K562 (cell line): ENCODE measurements at regions of chr12 and their contacts with region 1.

Region 1: DNA sequence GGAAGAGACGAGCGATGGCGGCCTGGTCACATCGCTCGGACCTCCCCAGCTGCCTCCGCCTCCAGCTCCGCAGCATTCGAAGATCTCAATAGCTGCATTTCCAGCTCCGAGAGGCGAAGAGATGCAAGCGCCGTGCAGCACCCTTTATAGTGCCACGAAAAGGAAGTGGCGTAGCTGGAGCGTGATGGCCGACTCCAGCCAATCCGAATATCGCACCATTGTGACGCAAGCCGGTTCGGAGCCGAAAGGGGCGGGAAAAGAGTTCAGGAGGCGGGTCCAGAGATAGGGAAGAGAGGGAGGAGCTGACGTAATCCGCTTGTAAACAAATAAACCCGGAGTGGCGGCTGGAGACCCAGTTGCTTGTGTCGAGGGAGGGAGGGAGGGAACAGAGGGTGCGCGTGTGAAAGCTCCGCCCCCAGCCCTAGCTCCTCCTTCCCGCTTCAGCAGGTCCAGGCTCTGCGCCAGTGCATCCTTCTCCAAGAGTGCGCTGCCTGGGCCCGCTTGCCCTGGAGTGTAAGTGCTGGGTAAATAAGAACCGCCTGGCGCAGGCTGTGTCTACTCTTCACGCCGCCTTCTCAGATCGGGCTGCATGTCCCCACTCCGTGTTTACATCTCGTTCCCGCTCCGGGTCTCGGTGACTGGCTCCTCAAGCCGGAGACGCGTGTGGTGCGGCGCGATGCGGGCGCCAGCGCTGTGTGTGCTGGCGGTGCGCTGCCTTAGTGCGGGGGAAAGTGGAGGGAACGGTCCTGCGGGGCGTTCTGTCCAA is at the start of gene BTG1:
- DNase-seq: peak; percentile 92 to 99 (median 96)
- ATAC-seq: peak; percentile 76
- H3K4me3 ChIP-seq: peak within 1 kb of the TSS; percentile 88
- H3K27ac ChIP-seq: peak within 1 kb of the TSS; percentile 87
- H3K4me1 ChIP-seq: peaks cover 20 to 25% of the 10 kb centered on the region in 2 experiments
- H3K27me3 ChIP-seq: no peaks in the 10 kb centered on the region
- CTCF ChIP-seq: no peak
- EP300 ChIP-seq: peak; percentile 43
- POLR2A ChIP-seq: peak; percentile 100
- RAD21 ChIP-seq: peak; percentile 16 to 17; a peak in 2 of 4 replicates
- polyA plus RNA-seq, gene BTG1: 3.7 to 4.3 TPM

Region 2: GRCh38 chr12:91382081-91382543 is 763.8 kb before region 1 on chr12:
- CTCF ChIA-PET with region 1: no interaction called
- POLR2A ChIA-PET with region 1: interaction called, 5 read pairs
- in situ Hi-C with region 1: no loop called
- intact Hi-C with region 1: loop called (anchors 2 kb)
- DNase-seq: peak; percentile 42 to 85 (median 50)
- ATAC-seq: peak; percentile 84
- H3K4me3 ChIP-seq: no peak overlapping the region
- H3K27ac ChIP-seq: no peak overlapping the region
- H3K4me1 ChIP-seq: no peaks in the 10 kb centered on the region
- H3K27me3 ChIP-seq: no peaks in the 10 kb centered on the region
- CTCF ChIP-seq: peak; percentile 66 to 88 (median 82)
- EP300 ChIP-seq: no peak
- POLR2A ChIP-seq: no peak
- RAD21 ChIP-seq: peak; percentile 79 to 83

Region 3: GRCh38 chr12:91778938-91779400 is 366.9 kb before region 1 on chr12:
- CTCF ChIA-PET with region 1: no interaction called
- POLR2A ChIA-PET with region 1: interaction called, 10 read pairs
- in situ Hi-C with region 1: no loop called
- intact Hi-C with region 1: no loop called
- DNase-seq: peak; percentile 20 to 77 (median 40)
- ATAC-seq: peak; percentile 98
- H3K4me3 ChIP-seq: no peak overlapping the region
- H3K27ac ChIP-seq: no peak overlapping the region
- H3K4me1 ChIP-seq: peaks cover 0 to 12% of the 10 kb centered on the region in 2 experiments; a peak in 3 of 5 replicates
- H3K27me3 ChIP-seq: no peaks in the 10 kb centered on the region
- CTCF ChIP-seq: no peak
- EP300 ChIP-seq: peak; percentile 54; the same call in 1 of the 2 replicates
- POLR2A ChIP-seq: no peak
- RAD21 ChIP-seq: no peak

Region 4: GRCh38 chr12:91910871-91911388 is 235.0 kb before region 1 on chr12:
- CTCF ChIA-PET with region 1: no interaction called
- POLR2A ChIA-PET with region 1: interaction called, 4 read pairs
- in situ Hi-C with region 1: no loop called
- intact Hi-C with region 1: loop called (anchors 10 kb)
- DNase-seq: no peak
- ATAC-seq: peak; percentile 56; the same call in 2 of the 3 replicates
- H3K4me3 ChIP-seq: no peak overlapping the region
- H3K27ac ChIP-seq: no peak overlapping the region
- H3K4me1 ChIP-seq: no peaks in the 10 kb centered on the region
- H3K27me3 ChIP-seq: no peaks in the 10 kb centered on the region
- CTCF ChIP-seq: no peak
- EP300 ChIP-seq: no peak
- POLR2A ChIP-seq: no peak
- RAD21 ChIP-seq: peak in 1 of 2 experiments; percentile 18; a peak in 1 of 4 replicates

Region 5: GRCh38 chr12:92123780-92124688 is 21.9 kb before region 1 on chr12:
- CTCF ChIA-PET with region 1: no interaction called
- POLR2A ChIA-PET with region 1: interaction called, 32 read pairs
- in situ Hi-C with region 1: no loop called
- intact Hi-C with region 1: no loop called
- DNase-seq: no peak
- ATAC-seq: no peak
- H3K4me3 ChIP-seq: no peak overlapping the region
- H3K27ac ChIP-seq: no peak overlapping the region
- H3K4me1 ChIP-seq: peaks cover 0 to 8% of the 10 kb centered on the region in 2 experiments; a peak in 2 of 5 replicates
- H3K27me3 ChIP-seq: no peaks in the 10 kb centered on the region
- CTCF ChIP-seq: no peak
- EP300 ChIP-seq: no peak
- POLR2A ChIP-seq: no peak
- RAD21 ChIP-seq: no peak

Region 6: DNA sequence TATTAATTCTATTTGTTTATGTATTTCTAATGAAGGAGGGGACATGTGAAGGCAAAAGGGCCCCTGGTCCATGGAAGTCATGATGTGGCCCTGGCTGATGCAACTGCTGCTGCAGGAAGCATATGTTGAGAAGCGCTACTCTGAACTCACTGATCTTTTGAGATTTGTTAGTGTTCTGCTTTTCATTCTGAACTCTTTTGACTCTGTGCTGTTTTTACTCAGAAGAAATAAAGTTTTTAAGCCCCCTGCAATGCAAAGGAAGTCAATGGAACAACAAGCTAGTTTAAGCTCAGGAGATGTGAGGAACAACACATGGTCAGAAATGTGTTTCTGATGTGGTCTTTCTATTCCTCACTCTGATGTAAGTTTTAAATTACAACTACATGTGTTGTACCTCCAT is 88.6 kb after region 1 on chr12:
- CTCF ChIA-PET with region 1: no interaction called
- POLR2A ChIA-PET with region 1: interaction called, 9 read pairs
- in situ Hi-C with region 1: no loop called
- intact Hi-C with region 1: loop called (anchors 5 kb)
- DNase-seq: no peak
- ATAC-seq: peak; percentile 61
- H3K4me3 ChIP-seq: no peak overlapping the region
- H3K27ac ChIP-seq: no peak overlapping the region
- H3K4me1 ChIP-seq: peaks cover 0 to 12% of the 10 kb centered on the region in 2 experiments; a peak in 4 of 5 replicates
- H3K27me3 ChIP-seq: no peaks in the 10 kb centered on the region
- CTCF ChIP-seq: no peak
- EP300 ChIP-seq: no peak
- POLR2A ChIP-seq: no peak
- RAD21 ChIP-seq: no peak

Region 7: DNA sequence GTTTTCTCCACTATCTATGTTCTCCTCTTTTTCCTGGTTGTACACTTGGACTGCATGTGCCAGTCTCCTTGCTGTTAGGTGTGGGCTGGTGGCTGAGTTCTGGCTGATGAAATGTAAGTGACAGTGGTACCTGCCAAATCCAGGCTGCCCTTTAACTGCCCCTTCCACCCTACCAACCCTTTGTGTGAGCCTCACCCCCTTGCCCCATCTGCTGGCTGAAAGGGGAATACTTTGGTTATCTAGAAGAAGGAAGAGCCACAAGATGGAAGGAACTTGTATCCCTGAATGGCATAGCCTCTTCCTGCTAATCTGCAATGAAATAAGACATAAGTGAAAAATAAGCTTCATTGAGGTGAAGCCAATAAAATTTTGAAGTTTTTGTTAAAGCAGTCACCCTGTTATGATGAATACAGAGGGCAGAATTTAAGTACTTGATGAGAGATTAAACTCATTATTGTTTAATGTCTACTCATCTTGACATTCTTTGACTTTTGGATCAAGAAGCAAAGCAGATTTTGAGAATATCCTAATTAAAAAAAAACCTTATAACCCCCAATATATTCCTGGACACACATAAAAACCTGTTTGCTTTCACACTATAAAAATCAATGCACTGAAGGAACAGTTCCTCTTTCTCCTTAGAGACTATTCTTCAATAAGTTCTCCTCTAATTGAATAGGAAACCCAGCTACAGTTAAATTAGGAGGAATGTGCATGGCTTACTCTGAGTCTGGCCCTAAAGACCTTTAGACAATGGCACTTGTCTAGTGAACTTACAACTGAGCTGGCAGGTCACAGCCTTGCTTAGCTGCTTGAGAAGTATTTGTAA is 262.4 kb after region 1 on chr12:
- CTCF ChIA-PET with region 1: no interaction called
- POLR2A ChIA-PET with region 1: interaction called, 47 read pairs
- in situ Hi-C with region 1: no loop called
- intact Hi-C with region 1: loop called (anchors 2 kb)
- DNase-seq: peak; percentile 23 to 70 (median 41)
- ATAC-seq: peak; percentile 63
- H3K4me3 ChIP-seq: no peak overlapping the region
- H3K27ac ChIP-seq: no peak overlapping the region
- H3K4me1 ChIP-seq: peaks cover 7 to 20% of the 10 kb centered on the region in 2 experiments; a peak in 3 of 5 replicates
- H3K27me3 ChIP-seq: no peaks in the 10 kb centered on the region
- CTCF ChIP-seq: peak; percentile 56 to 68 (median 59)
- EP300 ChIP-seq: no peak; the same call in 1 of the 2 replicates
- POLR2A ChIP-seq: no peak
- RAD21 ChIP-seq: peak; percentile 45 to 79